Astrocyte of the cerebellum (primary cell): ENCODE measurements at regions of chr18 and their contacts with region 1.

Region 1: GRCh38 chr18:54742659-54743604 is 85.3 kb upstream of the RAB27B start:
- DNase-seq: peak; percentile 100
- H3K4me3 ChIP-seq: no peak overlapping the region
- CTCF ChIP-seq: peak; percentile 3

Region 2: DNA sequence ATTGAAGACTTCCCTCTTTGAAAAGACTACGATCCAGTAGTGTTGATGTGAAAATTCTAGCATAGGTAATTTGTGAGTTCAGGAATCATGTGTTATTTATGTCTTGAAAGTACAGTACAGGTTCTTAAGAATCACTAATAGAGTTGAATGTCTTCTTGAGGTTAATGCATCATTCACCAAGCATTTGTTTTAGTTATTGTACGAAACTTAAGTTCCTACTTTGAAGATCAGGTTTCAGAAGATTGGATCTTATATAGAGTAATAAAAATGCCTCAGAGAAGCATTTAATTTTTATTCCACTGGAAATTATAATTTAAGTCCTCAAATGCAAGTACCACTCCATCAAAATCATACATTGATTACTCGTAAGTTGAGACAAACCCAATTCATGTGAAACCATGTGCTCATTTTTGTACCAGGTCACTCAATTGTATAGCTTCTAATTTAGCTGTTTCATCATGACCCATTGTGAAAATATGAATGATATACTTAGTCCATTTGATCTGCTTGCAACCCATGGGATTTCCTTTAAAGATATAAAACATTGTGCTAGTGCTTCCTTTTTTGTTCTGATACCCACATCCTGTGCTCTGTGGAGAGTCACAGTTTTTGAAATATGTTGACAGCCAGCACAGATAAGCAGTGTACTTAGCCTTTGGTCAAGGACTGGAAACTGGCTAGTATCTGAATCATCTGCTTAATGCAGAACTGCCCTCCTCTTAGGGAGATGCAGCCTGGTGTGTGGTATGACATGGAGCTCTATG is 62.8 kb after region 1 on chr18:
- in situ Hi-C with region 1: loop called (anchors 5 kb)
- DNase-seq: no peak
- H3K4me3 ChIP-seq: no peak overlapping the region
- CTCF ChIP-seq: no peak